H1 (cell line): ENCODE measurements at regions of chr7 and their contacts with region 1.

Region 1: DNA sequence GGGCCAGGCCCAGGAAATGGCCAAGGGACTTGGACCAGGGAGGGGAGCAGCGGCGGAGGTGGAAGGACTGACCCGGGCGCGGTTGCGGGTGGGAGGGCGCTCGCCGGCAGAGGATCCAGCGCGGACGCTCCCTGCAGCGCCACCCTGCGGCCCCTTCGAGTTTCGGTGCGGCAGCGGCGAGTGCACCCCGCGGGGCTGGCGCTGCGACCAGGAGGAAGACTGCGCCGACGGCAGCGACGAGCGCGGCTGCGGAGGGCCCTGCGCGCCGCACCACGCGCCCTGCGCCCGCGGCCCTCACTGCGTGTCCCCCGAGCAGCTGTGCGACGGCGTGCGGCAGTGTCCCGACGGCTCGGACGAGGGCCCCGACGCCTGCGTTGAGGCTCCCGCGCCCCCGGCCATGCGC is 16.8 kb upstream of the ZNF467 start:
- DNase-seq: peak in 1 of 2 experiments; percentile 90
- H3K4me3 ChIP-seq: peak overlapping the region; percentile 14 to 55 (median 23)
- H3K27ac ChIP-seq: no peak overlapping the region
- H3K4me1 ChIP-seq: peaks cover 0 to 4% (median 2%) of the 10 kb centered on the region in 4 experiments; a peak in 5 of 7 replicates
- H3K27me3 ChIP-seq: peaks cover 8 to 44% (median 35%) of the 10 kb centered on the region in 4 experiments
- CTCF ChIP-seq: peak in 2 of 3 experiments; percentile 82 to 86; a peak in 3 of 4 replicates
- EP300 ChIP-seq: no peak
- POLR2A ChIP-seq: no peak
- RAD21 ChIP-seq: peak; percentile 34 to 52; a peak in 3 of 4 replicates

Region 2: DNA sequence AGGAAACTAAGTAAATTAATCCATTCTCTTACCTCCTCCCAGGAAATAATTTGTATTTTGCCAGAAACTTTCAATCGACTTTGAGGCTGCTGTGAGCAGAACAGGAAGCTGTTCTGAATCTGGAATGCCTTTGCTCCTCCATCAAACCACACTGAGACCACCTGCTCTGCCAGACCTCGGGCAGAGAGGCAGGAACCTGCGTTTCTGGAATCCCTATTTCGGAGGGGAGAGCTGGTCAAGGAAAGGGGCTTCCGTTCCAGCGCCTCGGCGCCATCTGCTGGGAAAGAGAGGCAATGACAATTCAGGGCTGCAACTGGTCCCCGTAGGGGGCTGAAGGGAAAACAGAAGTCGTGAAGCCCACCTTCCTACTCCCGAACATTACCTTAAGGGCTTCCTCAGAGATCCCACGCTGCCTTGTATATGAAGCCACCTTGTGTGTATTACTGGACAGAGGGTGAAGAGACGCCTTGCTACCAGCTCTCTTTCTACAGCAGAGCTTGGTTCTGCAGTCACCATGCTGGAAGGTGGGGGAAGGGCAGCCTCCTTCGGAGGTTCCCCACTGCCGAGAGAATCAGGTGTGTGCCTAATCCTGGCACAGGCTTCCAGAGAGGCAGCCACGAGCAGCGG is 48.0 kb before region 1 on chr7:
- CTCF ChIA-PET with region 1: interaction called, 14 read pairs
- POLR2A ChIA-PET with region 1: no interaction called
- DNase-seq: peak; percentile 57 to 93
- H3K4me3 ChIP-seq: peak overlapping the region; percentile 37 to 65 (median 58); a peak in 7 of 8 replicates
- H3K27ac ChIP-seq: no peak overlapping the region
- H3K4me1 ChIP-seq: peaks cover 0 to 4% (median 1%) of the 10 kb centered on the region in 4 experiments; a peak in 2 of 7 replicates
- H3K27me3 ChIP-seq: no peaks in the 10 kb centered on the region
- CTCF ChIP-seq: peak; percentile 81 to 92 (median 89)
- EP300 ChIP-seq: no peak
- POLR2A ChIP-seq: no peak
- RAD21 ChIP-seq: peak; percentile 82 to 87

Region 3: DNA sequence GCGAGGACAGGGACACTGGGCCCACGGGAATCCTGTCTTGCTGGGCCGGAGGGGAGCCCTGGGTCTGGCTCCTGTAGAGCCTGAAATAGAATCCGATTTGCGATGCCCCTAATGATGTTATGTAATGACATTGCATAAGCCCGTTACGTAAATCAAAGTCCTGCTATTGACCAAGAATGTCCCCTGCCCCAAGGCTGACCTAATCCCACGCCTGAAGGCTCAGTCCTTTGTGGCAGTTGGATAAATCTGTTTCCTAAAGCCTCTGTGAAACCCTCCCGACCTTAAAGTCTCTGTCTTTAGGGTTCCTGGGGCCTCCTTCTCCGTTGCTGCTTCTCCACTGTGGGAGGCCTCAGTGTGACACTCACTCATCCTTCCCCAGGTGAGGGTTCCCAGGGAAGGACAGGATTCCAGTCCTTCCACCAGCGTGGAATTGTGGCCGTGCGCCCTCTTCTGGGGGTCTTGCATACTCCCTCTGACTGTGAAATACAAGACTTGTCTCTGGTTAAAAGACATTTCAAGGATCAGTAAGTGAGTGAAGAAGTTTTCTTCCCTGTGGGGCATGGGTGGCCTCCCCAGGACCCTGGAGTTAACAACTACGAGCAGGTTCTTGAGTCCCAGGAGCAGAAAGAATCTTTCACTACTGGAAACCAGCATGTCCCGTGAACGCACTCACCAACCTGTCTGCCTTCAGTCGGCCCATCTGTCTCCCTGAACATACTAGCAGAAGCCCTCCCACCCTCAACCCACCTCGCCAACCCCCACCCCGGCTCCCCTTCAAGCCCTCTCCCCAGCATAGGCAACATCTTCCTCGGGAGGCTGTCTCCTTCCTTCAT is 36.5 kb before region 1 on chr7:
- CTCF ChIA-PET with region 1: interaction called, 14 read pairs
- POLR2A ChIA-PET with region 1: no interaction called
- DNase-seq: peak in 1 of 2 experiments; percentile 83
- H3K4me3 ChIP-seq: no peak overlapping the region
- H3K27ac ChIP-seq: no peak overlapping the region
- H3K4me1 ChIP-seq: no peaks in the 10 kb centered on the region
- H3K27me3 ChIP-seq: no peaks in the 10 kb centered on the region; a peak in 1 of 7 replicates
- CTCF ChIP-seq: peak; percentile 66 to 81 (median 75)
- EP300 ChIP-seq: no peak
- POLR2A ChIP-seq: no peak
- RAD21 ChIP-seq: peak; percentile 62 to 73

Region 4: GRCh38 chr7:149764481-149765398 is 25.4 kb before region 1 on chr7:
- CTCF ChIA-PET with region 1: interaction called, 115 read pairs
- POLR2A ChIA-PET with region 1: no interaction called
- DNase-seq: peak in 1 of 2 experiments; percentile 73
- H3K4me3 ChIP-seq: peak overlapping the region; percentile 18 to 56 (median 38)
- H3K27ac ChIP-seq: no peak overlapping the region
- H3K4me1 ChIP-seq: peaks cover 0 to 14% (median 12%) of the 10 kb centered on the region in 4 experiments; a peak in 6 of 7 replicates
- H3K27me3 ChIP-seq: peaks cover 68 to 95% (median 87%) of the 10 kb centered on the region in 4 experiments
- CTCF ChIP-seq: peak in 2 of 3 experiments; percentile 33 to 51; a peak in 3 of 4 replicates
- EP300 ChIP-seq: no peak
- POLR2A ChIP-seq: no peak
- RAD21 ChIP-seq: peak; percentile 23 to 24; a peak in 2 of 4 replicates

Region 5: DNA sequence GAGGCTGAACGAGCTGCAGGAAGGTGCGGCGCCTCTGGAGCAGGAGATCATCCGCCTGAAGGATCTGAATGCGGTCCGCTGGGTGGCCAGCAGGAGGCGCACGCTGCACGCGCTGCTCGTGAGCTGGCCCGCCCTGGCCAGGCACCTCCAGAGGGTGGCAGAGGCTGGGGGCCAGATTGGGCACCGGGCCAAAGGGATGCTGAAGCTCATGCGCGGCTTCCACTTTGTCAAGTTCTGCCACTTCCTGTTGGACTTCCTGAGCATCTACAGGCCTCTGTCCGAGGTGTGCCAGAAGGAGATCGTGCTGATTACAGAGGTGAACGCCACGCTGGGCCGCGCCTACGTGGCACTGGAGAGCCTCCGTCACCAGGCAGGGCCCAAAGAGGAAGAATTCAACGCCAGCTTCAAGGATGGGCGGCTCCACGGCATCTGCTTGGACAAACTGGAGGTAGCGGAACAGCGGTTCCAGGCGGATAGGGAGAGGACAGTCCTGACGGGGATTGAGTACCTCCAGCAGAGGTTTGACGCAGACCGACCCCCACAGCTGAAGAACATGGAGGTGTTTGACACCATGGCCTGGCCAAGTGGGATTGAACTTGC is 71.4 kb after region 1 on chr7:
- CTCF ChIA-PET with region 1: interaction called, 15 read pairs
- POLR2A ChIA-PET with region 1: no interaction called
- DNase-seq: peak in 1 of 2 experiments; percentile 89
- H3K4me3 ChIP-seq: no peak overlapping the region
- H3K27ac ChIP-seq: no peak overlapping the region
- H3K4me1 ChIP-seq: no peaks in the 10 kb centered on the region
- H3K27me3 ChIP-seq: no peaks in the 10 kb centered on the region; a peak in 2 of 7 replicates
- CTCF ChIP-seq: peak; percentile 98 to 100 (median 99)
- EP300 ChIP-seq: no peak
- POLR2A ChIP-seq: no peak
- RAD21 ChIP-seq: peak; percentile 87 to 94